HEK293 (cell line): ENCODE measurements at regions of chr18 and their contacts with region 1.

Region 1: GRCh38 chr18:3869848-3870247 is 419.9 kb downstream of the TGIF1 start:
- H3K4me3 ChIP-seq: no peak overlapping the region
- H3K27ac ChIP-seq: no peak overlapping the region
- H3K4me1 ChIP-seq: peaks cover 6% of the 10 kb centered on the region
- CTCF ChIP-seq: 0 out of 2 replicates have a peak, but pooled peaks have one; percentile 19

Region 2: GRCh38 chr18:2104620-2105462 is 1765.0 kb before region 1 on chr18:
- CTCF ChIA-PET with region 1: no interaction called
- POLR2A ChIA-PET with region 1: no interaction called
- H3K4me3 ChIP-seq: no peak overlapping the region
- H3K27ac ChIP-seq: no peak overlapping the region
- H3K4me1 ChIP-seq: no peaks in the 10 kb centered on the region
- CTCF ChIP-seq: peak; percentile 77

Region 3: GRCh38 chr18:3281456-3282400 is 588.1 kb before region 1 on chr18:
- CTCF ChIA-PET with region 1: interaction called, 15 read pairs
- POLR2A ChIA-PET with region 1: no interaction called
- H3K4me3 ChIP-seq: no peak overlapping the region
- H3K27ac ChIP-seq: no peak overlapping the region
- H3K4me1 ChIP-seq: no peaks in the 10 kb centered on the region
- CTCF ChIP-seq: peak; percentile 36; the same call in 1 of the 2 replicates

Region 4: DNA sequence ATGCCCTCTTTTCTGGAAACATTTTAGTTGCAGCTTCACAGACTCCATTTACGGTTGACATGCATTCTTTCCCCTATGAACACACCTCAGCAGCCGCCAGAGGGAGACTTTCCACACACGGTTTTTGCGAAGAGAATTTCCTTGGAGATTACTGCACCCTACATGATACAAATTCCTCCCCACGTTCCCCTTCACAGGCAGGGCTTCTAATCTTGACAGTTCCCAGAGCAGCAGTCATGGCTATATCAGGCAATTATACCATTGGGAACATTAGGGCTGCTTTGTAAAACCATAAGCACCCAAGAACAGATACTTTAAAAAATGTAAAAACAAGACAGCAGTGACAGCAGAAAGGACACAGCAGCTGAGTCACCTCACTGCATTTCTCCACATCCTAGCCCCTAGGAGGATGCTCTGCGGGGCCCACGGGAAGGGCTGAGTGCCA is 166.1 kb before region 1 on chr18:
- CTCF ChIA-PET with region 1: interaction called, 43 read pairs
- POLR2A ChIA-PET with region 1: no interaction called
- H3K4me3 ChIP-seq: no peak overlapping the region
- H3K27ac ChIP-seq: no peak overlapping the region
- H3K4me1 ChIP-seq: no peaks in the 10 kb centered on the region
- CTCF ChIP-seq: peak; percentile 77

Region 5: GRCh38 chr18:3782901-3783300 is 86.9 kb before region 1 on chr18:
- CTCF ChIA-PET with region 1: interaction called, 10 read pairs
- POLR2A ChIA-PET with region 1: no interaction called
- H3K4me3 ChIP-seq: no peak overlapping the region
- H3K27ac ChIP-seq: no peak overlapping the region
- H3K4me1 ChIP-seq: no peaks in the 10 kb centered on the region
- CTCF ChIP-seq: no peak

Region 6: DNA sequence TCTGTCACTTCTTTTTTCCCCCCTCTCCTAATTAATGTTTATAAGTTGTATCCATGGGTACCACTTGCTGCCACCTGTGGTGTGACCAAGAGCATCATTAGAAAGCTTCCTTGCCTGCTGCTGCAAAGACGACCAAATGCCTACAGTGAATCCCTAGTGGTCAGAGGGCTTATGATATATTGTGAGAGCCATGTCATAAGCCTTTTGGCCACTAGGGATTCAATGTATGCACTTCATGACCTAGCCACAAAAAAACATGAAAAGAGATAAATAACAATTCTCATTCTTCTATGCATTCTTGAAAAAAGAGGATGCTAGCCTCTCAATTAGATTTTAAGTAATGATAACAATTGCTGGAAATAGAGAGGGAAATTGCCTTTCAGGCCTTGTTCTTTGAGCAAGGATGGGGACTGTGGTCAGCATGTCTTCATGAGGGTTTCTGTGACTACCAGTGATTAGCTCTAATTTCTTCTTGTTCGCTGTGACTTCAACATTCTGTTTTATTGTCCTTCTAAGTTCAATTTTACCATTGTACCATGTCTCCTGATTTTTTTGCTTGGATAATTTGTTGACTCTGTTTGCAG is 15.5 kb after region 1 on chr18:
- CTCF ChIA-PET with region 1: interaction called, 17 read pairs
- POLR2A ChIA-PET with region 1: no interaction called
- H3K4me3 ChIP-seq: no peak overlapping the region
- H3K27ac ChIP-seq: no peak overlapping the region
- H3K4me1 ChIP-seq: peaks cover 2% of the 10 kb centered on the region
- CTCF ChIP-seq: peak; percentile 52; the same call in 1 of the 2 replicates